Body of pancreas (tissue), 4 donors: ENCODE measurements at regions of chr11 and their contacts with region 1.

Region 1: GRCh38 chr11:16613512-16614381 is 124.7 kb upstream of the C11orf58 start:
- DNase-seq: peak; percentile 88 to 93 (median 90)
- ATAC-seq: peak; percentile 97
- H3K4me3 ChIP-seq: peak overlapping the region in 1 of 2 donors; percentile 1
- H3K27ac ChIP-seq: peak overlapping the region; percentile 4 to 65 (median 40)
- H3K4me1 ChIP-seq: peaks cover 19% of the 10 kb centered on the region
- H3K27me3 ChIP-seq: no peaks in the 10 kb centered on the region
- CTCF ChIP-seq: peak; percentile 81 to 95 (median 91)
- POLR2A ChIP-seq: peak in 2 of 3 donors; percentile 30 to 40

Region 2: GRCh38 chr11:15327786-15328231 is 1285.9 kb before region 1 on chr11:
- intact Hi-C with region 1: loop called (anchors 5 kb)
- DNase-seq: peak; percentile 57 to 74 (median 60)
- ATAC-seq: peak; percentile 75
- H3K4me3 ChIP-seq: no peak overlapping the region
- H3K27ac ChIP-seq: no peak overlapping the region
- H3K4me1 ChIP-seq: no peaks in the 10 kb centered on the region
- H3K27me3 ChIP-seq: no peaks in the 10 kb centered on the region
- CTCF ChIP-seq: peak; percentile 15 to 66 (median 60)
- POLR2A ChIP-seq: no peak

Region 3: GRCh38 chr11:15649371-15650104 is 964.2 kb before region 1 on chr11:
- intact Hi-C with region 1: loop called (anchors 10 kb)
- DNase-seq: no peak
- ATAC-seq: no peak
- H3K4me3 ChIP-seq: no peak overlapping the region
- H3K27ac ChIP-seq: peak overlapping the region in 3 of 4 donors; percentile 89 to 92 (median 90)
- H3K4me1 ChIP-seq: peaks cover 13% of the 10 kb centered on the region
- H3K27me3 ChIP-seq: no peaks in the 10 kb centered on the region
- CTCF ChIP-seq: no peak
- POLR2A ChIP-seq: no peak

Region 4: DNA sequence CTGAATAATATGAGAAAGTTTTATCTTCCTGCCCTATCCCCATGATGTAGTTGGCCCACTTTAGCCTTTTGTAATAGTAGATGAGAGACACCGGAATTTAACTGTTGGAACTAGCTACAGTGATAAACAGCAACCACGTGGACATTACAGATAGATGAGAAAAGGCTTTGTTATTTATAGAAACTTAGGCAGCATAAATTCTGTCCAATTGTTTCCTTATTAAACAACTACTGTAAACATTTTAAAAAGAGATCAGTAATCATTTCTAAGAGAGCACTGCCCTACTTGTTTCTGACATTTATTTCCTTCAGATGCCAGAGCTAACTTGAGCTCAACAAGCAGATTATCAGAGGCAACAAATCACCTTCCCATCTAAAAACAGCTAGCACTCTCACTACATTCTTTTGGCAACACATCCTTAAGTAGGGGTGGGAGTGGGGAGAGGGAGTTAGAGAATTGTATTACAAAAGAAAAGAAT is 320.5 kb before region 1 on chr11:
- intact Hi-C with region 1: no loop called
- DNase-seq: no peak
- ATAC-seq: peak; percentile 62
- H3K4me3 ChIP-seq: no peak overlapping the region
- H3K27ac ChIP-seq: peak overlapping the region in 1 of 4 donors; percentile 17
- H3K4me1 ChIP-seq: peaks cover 26% of the 10 kb centered on the region
- H3K27me3 ChIP-seq: no peaks in the 10 kb centered on the region
- CTCF ChIP-seq: no peak
- POLR2A ChIP-seq: no peak

Region 5: DNA sequence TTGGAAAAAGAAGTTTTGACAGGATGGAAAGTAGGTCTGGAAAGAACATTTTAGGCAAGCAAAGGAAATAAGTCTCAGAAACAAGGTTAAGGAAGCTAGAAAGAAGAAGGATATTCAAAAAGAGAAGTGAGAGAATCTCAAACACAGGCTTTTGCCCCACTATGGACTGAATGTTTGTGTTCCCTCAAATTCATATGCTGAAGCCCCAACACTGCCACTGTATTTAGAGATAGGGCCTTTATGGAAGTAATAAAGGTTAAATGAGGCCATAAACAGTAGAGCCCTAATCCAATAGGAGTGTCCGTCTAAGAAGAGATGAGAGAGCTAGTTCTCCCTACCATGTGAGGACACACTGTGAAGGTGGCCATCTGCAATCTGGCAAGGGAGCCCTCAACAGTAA is 484.3 kb after region 1 on chr11:
- intact Hi-C with region 1: no loop called
- DNase-seq: no peak
- ATAC-seq: no peak
- H3K4me3 ChIP-seq: no peak overlapping the region
- H3K27ac ChIP-seq: peak overlapping the region in 1 of 4 donors; percentile 40
- H3K4me1 ChIP-seq: no peaks in the 10 kb centered on the region
- H3K27me3 ChIP-seq: no peaks in the 10 kb centered on the region
- CTCF ChIP-seq: no peak
- POLR2A ChIP-seq: no peak